SK-N-SH (cell line): ENCODE measurements at regions of chr22 and their contacts with region 1.

Region 1: GRCh38 chr22:28051787-28052356 is 132.8 kb upstream of the PITPNB start:
- DNase-seq: peak; percentile 44
- H3K4me3 ChIP-seq: no peak overlapping the region; a peak in 1 of 4 replicates
- H3K27ac ChIP-seq: peak overlapping the region in 1 of 2 experiments; percentile 28; a peak in 2 of 4 replicates
- H3K4me1 ChIP-seq: peaks cover 10 to 34% of the 10 kb centered on the region in 2 experiments; a peak in 3 of 4 replicates
- H3K27me3 ChIP-seq: no peaks in the 10 kb centered on the region
- CTCF ChIP-seq: peak; percentile 98
- EP300 ChIP-seq: no peak
- RAD21 ChIP-seq: peak; percentile 92

Region 2: GRCh38 chr22:28019881-28020871 is 31.7 kb before region 1 on chr22:
- CTCF ChIA-PET with region 1: interaction called, 61 read pairs
- POLR2A ChIA-PET with region 1: no interaction called
- DNase-seq: peak; percentile 89
- H3K4me3 ChIP-seq: peak overlapping the region in 1 of 2 experiments; percentile 18; a peak in 1 of 4 replicates
- H3K27ac ChIP-seq: peak overlapping the region; percentile 4 to 91; a peak in 3 of 4 replicates
- H3K4me1 ChIP-seq: peaks cover 8 to 99% of the 10 kb centered on the region in 2 experiments; a peak in 3 of 4 replicates
- H3K27me3 ChIP-seq: no peaks in the 10 kb centered on the region
- CTCF ChIP-seq: peak; percentile 96
- EP300 ChIP-seq: no peak
- RAD21 ChIP-seq: peak; percentile 93

Region 3: GRCh38 chr22:28034760-28035401 is 17.0 kb before region 1 on chr22:
- CTCF ChIA-PET with region 1: interaction called, 28 read pairs
- POLR2A ChIA-PET with region 1: no interaction called
- DNase-seq: peak; percentile 64
- H3K4me3 ChIP-seq: peak overlapping the region; percentile 6 to 17; a peak in 2 of 4 replicates
- H3K27ac ChIP-seq: peak overlapping the region; percentile 42 to 97; a peak in 3 of 4 replicates
- H3K4me1 ChIP-seq: peaks cover 20 to 52% of the 10 kb centered on the region in 2 experiments
- H3K27me3 ChIP-seq: no peaks in the 10 kb centered on the region
- CTCF ChIP-seq: no peak
- EP300 ChIP-seq: peak in 1 of 2 experiments; percentile 86; a peak in 3 of 4 replicates
- RAD21 ChIP-seq: no peak

Region 4: GRCh38 chr22:28112548-28113043 is 60.7 kb after region 1 on chr22:
- CTCF ChIA-PET with region 1: interaction called, 10 read pairs
- POLR2A ChIA-PET with region 1: no interaction called
- DNase-seq: peak; percentile 47
- H3K4me3 ChIP-seq: 0 out of 4 replicates have a peak overlapping the region, but pooled peaks of 1 of the 2 experiments have one; percentile 7
- H3K27ac ChIP-seq: peak overlapping the region; percentile 63 to 70
- H3K4me1 ChIP-seq: peaks cover 20 to 29% of the 10 kb centered on the region in 2 experiments
- H3K27me3 ChIP-seq: no peaks in the 10 kb centered on the region
- CTCF ChIP-seq: peak; percentile 62
- EP300 ChIP-seq: peak in 1 of 2 experiments; percentile 49; a peak in 1 of 4 replicates
- RAD21 ChIP-seq: peak; percentile 54

Region 5: DNA sequence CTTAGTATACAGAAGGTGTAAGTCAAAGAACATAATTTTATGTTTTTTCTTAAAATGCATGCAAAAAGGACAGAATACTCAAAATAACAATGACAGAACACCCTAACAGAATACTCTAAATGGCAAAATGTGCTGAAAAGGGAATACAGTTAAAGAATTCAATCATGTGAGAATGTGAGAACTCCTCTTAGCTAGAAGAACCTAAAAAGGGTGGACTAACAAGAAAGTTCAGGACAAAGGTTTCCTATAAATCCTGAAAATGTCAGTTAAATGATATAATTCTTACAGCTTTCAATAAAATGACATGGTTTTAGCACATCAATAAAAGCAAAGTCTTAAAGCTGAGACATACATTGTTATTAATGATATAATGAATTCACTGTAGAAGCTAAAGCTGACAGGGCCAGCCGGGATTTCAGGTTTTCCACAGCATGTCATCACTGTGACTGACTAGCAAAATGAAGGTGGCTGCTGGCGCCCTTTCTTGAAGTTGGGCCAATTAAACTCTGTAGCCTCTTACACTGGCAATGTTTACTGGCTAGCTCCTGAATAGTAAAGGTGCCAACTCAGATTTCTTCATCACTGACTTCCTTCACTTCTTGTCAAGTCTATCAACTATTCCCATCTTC is 383.4 kb after region 1 on chr22:
- CTCF ChIA-PET with region 1: interaction called, 44 read pairs
- POLR2A ChIA-PET with region 1: no interaction called
- DNase-seq: no peak
- H3K4me3 ChIP-seq: no peak overlapping the region
- H3K27ac ChIP-seq: no peak overlapping the region
- H3K4me1 ChIP-seq: peaks cover 0 to 25% of the 10 kb centered on the region in 2 experiments; a peak in 3 of 4 replicates
- H3K27me3 ChIP-seq: no peaks in the 10 kb centered on the region
- CTCF ChIP-seq: no peak
- EP300 ChIP-seq: no peak
- RAD21 ChIP-seq: no peak

Region 6: GRCh38 chr22:28594797-28595462 is 543.1 kb after region 1 on chr22:
- CTCF ChIA-PET with region 1: interaction called, 82 read pairs
- POLR2A ChIA-PET with region 1: no interaction called
- DNase-seq: peak; percentile 60
- H3K4me3 ChIP-seq: no peak overlapping the region
- H3K27ac ChIP-seq: peak overlapping the region; percentile 34 to 72
- H3K4me1 ChIP-seq: peaks cover 9% of the 10 kb centered on the region in 2 experiments; a peak in 3 of 4 replicates
- H3K27me3 ChIP-seq: no peaks in the 10 kb centered on the region
- CTCF ChIP-seq: peak; percentile 85
- EP300 ChIP-seq: peak in 1 of 2 experiments; percentile 59; a peak in 2 of 4 replicates
- RAD21 ChIP-seq: peak; percentile 99

Region 7: DNA sequence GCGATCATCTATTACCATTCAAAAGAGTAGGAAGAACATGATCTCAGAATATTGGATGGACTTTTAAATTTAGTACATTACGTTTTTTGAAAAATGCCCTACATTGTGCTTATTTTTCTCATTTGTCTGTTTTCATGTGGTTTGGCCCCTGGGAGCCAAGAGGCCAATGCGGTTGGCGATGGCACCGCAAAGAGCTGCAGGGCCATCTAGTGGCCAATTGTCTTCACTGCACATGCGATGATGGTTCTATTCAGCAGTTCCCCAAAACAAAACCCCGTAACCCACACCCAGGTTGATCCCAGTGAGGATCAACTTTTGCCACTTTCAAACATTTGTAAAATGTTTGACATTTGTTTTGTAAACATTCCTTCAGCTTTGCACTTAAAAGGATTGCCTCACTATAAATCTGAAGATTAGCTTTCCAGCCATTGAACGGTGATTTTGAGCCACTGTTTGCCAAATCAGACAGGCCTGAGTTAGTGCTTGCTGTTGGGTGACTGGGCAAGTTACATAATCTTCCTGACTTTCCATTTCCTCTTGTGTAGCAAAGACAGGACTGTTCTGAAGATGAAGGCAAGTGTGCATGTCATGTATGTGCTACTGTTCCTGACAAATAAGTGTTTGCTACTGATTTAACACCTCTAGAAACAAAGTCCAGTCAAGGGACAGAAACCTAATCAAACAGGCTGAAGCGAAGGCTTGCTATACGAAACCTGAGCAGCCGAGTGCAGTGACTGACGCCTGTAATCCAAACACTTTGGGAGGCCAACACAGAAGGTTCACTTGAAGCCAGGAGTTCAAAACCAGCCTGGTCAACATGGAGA is 777.7 kb after region 1 on chr22:
- CTCF ChIA-PET with region 1: interaction called, 21 read pairs
- POLR2A ChIA-PET with region 1: no interaction called
- DNase-seq: peak; percentile 77
- H3K4me3 ChIP-seq: peak overlapping the region in 1 of 2 experiments; percentile 31; a peak in 1 of 4 replicates
- H3K27ac ChIP-seq: no peak overlapping the region
- H3K4me1 ChIP-seq: no peaks in the 10 kb centered on the region
- H3K27me3 ChIP-seq: no peaks in the 10 kb centered on the region
- CTCF ChIP-seq: peak; percentile 98
- EP300 ChIP-seq: no peak
- RAD21 ChIP-seq: peak; percentile 98